Heart left ventricle (tissue), 16 donors: ENCODE measurements at regions of chr17 and their contacts with region 1.

Region 1: GRCh38 chr17:1847191-1847590 is 17.4 kb downstream of the RPA1 start:
- DNase-seq: peak in 4 of 5 donors; percentile 27 to 81 (median 63)
- ATAC-seq: peak; percentile 92 to 98 (median 96)
- H3K4me3 ChIP-seq: no peak overlapping the region
- H3K27ac ChIP-seq: peak overlapping the region in 10 of 12 donors; percentile 8 to 76 (median 51)
- H3K4me1 ChIP-seq: peaks cover 0 to 27% (median 10%) of the 10 kb centered on the region in 12 donors
- H3K27me3 ChIP-seq: no peaks in the 10 kb centered on the region
- CTCF ChIP-seq: no peak
- POLR2A ChIP-seq: no peak

Region 2: GRCh38 chr17:1793447-1793806 is 53.8 kb before region 1 on chr17:
- intact Hi-C with region 1: loop called in 2 of 10 experiments (anchors 5 to 10 kb)
- DNase-seq: no peak
- ATAC-seq: no peak
- H3K4me3 ChIP-seq: no peak overlapping the region
- H3K27ac ChIP-seq: peak overlapping the region in 6 of 12 donors; percentile 6 to 92 (median 60)
- H3K4me1 ChIP-seq: peaks cover 0 to 34% (median 16%) of the 10 kb centered on the region in 12 donors
- H3K27me3 ChIP-seq: no peaks in the 10 kb centered on the region
- CTCF ChIP-seq: no peak
- POLR2A ChIP-seq: no peak